Right ventricle myocardium inferior (tissue), 1 donor: ENCODE measurements at regions of chr5 and their contacts with region 1.

Region 1: GRCh38 chr5:125587631-125588030 is 835.6 kb upstream of the GRAMD2B start:
- DNase-seq: no peak
- ATAC-seq: no peak

Region 2: GRCh38 chr5:125634216-125634835 is 46.7 kb after region 1 on chr5:
- intact Hi-C with region 1: loop called (anchors 2 kb)
- DNase-seq: no peak
- ATAC-seq: no peak